ENCODE measurements at regions of chr11 and their contacts with region 1.

Region 1: DNA sequence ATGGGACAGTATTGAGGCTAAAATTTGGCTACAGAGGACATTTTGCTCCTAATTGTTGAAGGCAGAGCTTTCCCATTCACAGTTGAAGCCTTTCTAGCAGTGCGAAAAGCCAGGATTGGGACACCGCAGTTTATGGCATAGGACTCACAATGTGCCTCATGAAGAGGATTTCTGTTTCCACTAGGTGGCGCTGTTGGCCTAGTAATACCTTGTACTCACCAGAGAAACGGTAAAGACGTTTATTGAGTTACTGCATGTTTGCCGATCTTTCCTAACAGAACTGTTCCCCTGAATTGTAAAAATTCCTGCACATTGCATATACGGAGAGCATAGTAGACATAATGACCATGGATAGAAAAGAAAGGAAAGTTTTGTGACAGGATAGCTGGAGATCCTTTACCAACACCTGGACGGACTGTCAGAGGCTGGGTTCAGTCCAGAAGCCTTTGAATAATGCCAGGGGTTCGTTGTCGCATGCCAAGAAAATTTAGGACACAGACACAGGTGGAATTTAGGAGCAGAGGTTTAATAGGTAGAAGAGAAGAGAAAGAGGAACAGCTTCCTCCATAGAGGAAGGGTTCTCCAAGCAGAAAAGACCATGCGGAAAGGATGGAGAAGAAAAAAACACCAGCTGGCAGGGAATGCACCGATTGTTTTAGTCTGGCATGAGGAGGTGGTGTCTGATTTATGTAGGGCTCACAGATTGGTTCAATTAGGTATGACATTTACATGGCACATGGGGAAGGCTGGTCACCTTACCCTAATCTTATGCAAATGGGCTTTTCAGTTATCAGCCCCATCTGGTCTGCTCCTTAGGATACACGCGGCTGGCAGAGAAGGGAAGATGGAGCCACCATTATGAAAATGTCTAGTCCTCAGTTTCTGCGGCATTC is 10.8 kb upstream of the OR51D1 start:
- DNase-seq: peak; percentile 39 to 50
- H3K4me3 ChIP-seq: no peak overlapping the region
- H3K27ac ChIP-seq: no peak overlapping the region
- H3K4me1 ChIP-seq: no peaks in the 10 kb centered on the region
- H3K27me3 ChIP-seq: peaks cover 10% of the 10 kb centered on the region
- CTCF ChIP-seq: peak; percentile 80

Region 2: DNA sequence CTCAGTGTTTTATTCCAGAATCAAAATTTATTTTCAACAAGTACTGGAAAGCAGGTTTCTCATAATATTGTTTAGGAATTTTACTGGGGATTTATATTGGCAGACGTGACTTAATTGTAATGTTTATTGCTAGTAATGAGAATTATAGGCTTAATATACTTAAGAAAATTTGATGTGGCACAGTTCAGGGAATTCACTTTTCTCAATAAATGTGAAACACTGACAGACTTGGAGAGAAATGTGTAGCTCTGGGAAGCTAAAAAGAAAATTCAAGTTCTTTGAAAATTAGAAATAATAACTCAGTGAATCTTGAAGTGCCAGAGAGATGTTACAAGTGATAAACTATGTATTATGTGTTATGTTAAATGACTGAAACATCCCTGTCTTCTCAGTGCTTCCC is 194.6 kb after region 1 on chr11 and contains the start of gene OR51F2:
- CTCF ChIA-PET with region 1: no interaction called
- POLR2A ChIA-PET with region 1: no interaction called
- intact Hi-C with region 1: no loop called
- DNase-seq: no peak
- H3K4me3 ChIP-seq: no peak within 1 kb of the TSS
- H3K27ac ChIP-seq: no peak within 1 kb of the TSS
- H3K4me1 ChIP-seq: no peaks in the 10 kb centered on the region
- H3K27me3 ChIP-seq: no peaks in the 10 kb centered on the region
- CTCF ChIP-seq: no peak
- total RNA-seq, gene OR51F2: not detected in 2 replicates

Region 3: GRCh38 chr11:5369793-5370192 is 743.3 kb after region 1 on chr11:
- CTCF ChIA-PET with region 1: no interaction called
- POLR2A ChIA-PET with region 1: no interaction called
- intact Hi-C with region 1: loop called (anchors 5 kb)
- DNase-seq: no peak
- H3K4me3 ChIP-seq: no peak overlapping the region
- H3K27ac ChIP-seq: no peak overlapping the region
- H3K4me1 ChIP-seq: no peaks in the 10 kb centered on the region
- H3K27me3 ChIP-seq: no peaks in the 10 kb centered on the region
- CTCF ChIP-seq: no peak

Region 4: GRCh38 chr11:5380740-5381342 is 754.4 kb after region 1 on chr11:
- CTCF ChIA-PET with region 1: no interaction called
- POLR2A ChIA-PET with region 1: no interaction called
- intact Hi-C with region 1: loop called (anchors 5 kb)
- DNase-seq: peak in 1 of 2 experiments; percentile 23
- H3K4me3 ChIP-seq: no peak overlapping the region
- H3K27ac ChIP-seq: no peak overlapping the region
- H3K4me1 ChIP-seq: no peaks in the 10 kb centered on the region
- H3K27me3 ChIP-seq: no peaks in the 10 kb centered on the region
- CTCF ChIP-seq: peak; percentile 75

Measured in PC-9 (cell line).